H1 (cell line): ENCODE measurements at regions of chr3 and their contacts with region 1.

Region 1: GRCh38 chr3:98188545-98188944 is 22.0 kb downstream of the OR5H15 start:
- DNase-seq: no peak
- H3K4me3 ChIP-seq: no peak overlapping the region
- H3K27ac ChIP-seq: no peak overlapping the region
- H3K4me1 ChIP-seq: 0 out of 7 replicates have a peak, but pooled peaks cover 0 to 2% (median 0%) of the 10 kb centered on the region in 4 experiments
- H3K27me3 ChIP-seq: no peaks in the 10 kb centered on the region
- CTCF ChIP-seq: peak in 2 of 3 experiments; percentile 49 to 52; a peak in 3 of 4 replicates
- EP300 ChIP-seq: no peak
- POLR2A ChIP-seq: no peak
- RAD21 ChIP-seq: peak; percentile 55 to 57

Region 2: DNA sequence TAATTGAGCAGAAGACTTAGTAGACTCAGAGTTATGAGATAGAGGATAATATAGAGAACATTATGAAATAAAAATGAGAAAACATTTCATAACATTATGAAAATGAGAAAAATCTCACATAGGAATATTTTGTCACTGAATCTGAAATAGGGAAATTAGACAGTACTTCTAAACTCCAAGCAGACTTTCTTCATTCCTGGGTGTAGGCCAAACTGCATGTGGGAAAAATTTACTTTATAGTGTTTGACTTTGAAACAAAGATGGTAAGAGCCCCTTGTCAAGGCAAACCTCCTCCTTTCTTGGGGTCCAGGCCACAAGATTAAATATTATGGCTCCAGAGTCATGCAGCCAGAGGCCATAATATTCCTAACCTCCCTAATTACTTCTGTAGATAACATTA is 48.0 kb before region 1 on chr3:
- CTCF ChIA-PET with region 1: interaction called, 10 read pairs
- POLR2A ChIA-PET with region 1: no interaction called
- DNase-seq: no peak
- H3K4me3 ChIP-seq: no peak overlapping the region
- H3K27ac ChIP-seq: no peak overlapping the region
- H3K4me1 ChIP-seq: peaks cover 0 to 5% (median 0%) of the 10 kb centered on the region in 4 experiments; a peak in 1 of 7 replicates
- H3K27me3 ChIP-seq: no peaks in the 10 kb centered on the region
- CTCF ChIP-seq: no peak
- EP300 ChIP-seq: no peak
- POLR2A ChIP-seq: no peak
- RAD21 ChIP-seq: no peak

Region 3: DNA sequence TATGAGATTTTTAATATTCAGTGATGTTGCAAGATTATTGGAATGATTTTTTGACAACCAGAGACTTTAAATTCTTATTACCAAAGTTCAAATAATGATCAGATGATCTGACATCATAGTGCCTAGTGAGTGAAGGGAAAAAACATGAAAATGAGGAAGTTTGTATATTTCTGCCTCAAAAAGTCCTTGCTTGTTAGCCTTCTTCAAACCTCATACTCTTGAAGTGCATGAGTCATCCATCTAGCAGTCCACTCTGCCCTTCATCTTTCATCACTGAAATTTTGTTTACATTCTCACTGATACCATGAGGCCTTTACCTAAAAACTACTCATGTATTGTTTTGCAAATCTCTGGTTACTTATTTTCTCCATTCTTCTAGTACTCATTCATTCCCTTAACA is 51.6 kb after region 1 on chr3:
- CTCF ChIA-PET with region 1: no interaction called
- POLR2A ChIA-PET with region 1: no interaction called
- DNase-seq: no peak
- H3K4me3 ChIP-seq: no peak overlapping the region
- H3K27ac ChIP-seq: no peak overlapping the region
- H3K4me1 ChIP-seq: peaks cover 0 to 8% (median 1%) of the 10 kb centered on the region in 4 experiments; a peak in 5 of 7 replicates
- H3K27me3 ChIP-seq: no peaks in the 10 kb centered on the region
- CTCF ChIP-seq: no peak
- EP300 ChIP-seq: no peak
- POLR2A ChIP-seq: no peak
- RAD21 ChIP-seq: no peak

Region 4: DNA sequence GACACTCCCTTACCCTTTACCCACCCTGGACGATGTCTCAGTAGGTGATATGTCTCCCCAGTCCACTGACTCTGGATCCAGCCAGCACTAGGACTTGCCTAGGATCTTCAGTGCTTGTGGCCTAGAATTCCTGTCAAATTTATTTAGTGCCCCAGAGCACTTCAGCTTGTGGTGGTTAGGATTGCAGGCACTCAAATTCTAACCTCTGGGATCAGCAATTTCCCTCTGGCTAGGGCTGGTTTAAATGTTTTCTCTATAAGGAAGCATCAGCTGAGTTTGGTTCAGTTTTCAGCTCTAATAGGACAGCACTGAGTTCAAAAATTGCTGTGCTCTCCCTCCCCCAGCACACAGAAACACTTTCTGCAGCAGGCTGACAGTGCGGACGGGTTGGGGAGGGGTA is 83.6 kb after region 1 on chr3:
- CTCF ChIA-PET with region 1: no interaction called
- POLR2A ChIA-PET with region 1: no interaction called
- DNase-seq: no peak
- H3K4me3 ChIP-seq: no peak overlapping the region
- H3K27ac ChIP-seq: no peak overlapping the region
- H3K4me1 ChIP-seq: no peaks in the 10 kb centered on the region
- H3K27me3 ChIP-seq: no peaks in the 10 kb centered on the region
- CTCF ChIP-seq: no peak
- EP300 ChIP-seq: no peak
- POLR2A ChIP-seq: no peak
- RAD21 ChIP-seq: no peak